ENCODE measurements at regions of chr10 and their contacts with region 1.

Region 1: GRCh38 chr10:45008524-45009161 is 7.9 kb downstream of the ZNF22 start:
- DNase-seq: peak; percentile 96
- ATAC-seq: peak; percentile 98
- H3K4me3 ChIP-seq: no peak overlapping the region
- H3K27ac ChIP-seq: no peak overlapping the region
- H3K4me1 ChIP-seq: peaks cover 5% of the 10 kb centered on the region
- H3K27me3 ChIP-seq: no peaks in the 10 kb centered on the region
- CTCF ChIP-seq: peak; percentile 98

Region 2: GRCh38 chr10:44932517-44933450 is 75.9 kb before region 1 on chr10:
- CTCF ChIA-PET with region 1: no interaction called
- POLR2A ChIA-PET with region 1: no interaction called
- intact Hi-C with region 1: loop called (anchors 2 kb)
- DNase-seq: peak; percentile 91
- ATAC-seq: peak; percentile 99
- H3K4me3 ChIP-seq: no peak overlapping the region
- H3K27ac ChIP-seq: no peak overlapping the region
- H3K4me1 ChIP-seq: no peaks in the 10 kb centered on the region
- H3K27me3 ChIP-seq: 0 out of 2 replicates have a peak, but pooled peaks cover 5% of the 10 kb centered on the region
- CTCF ChIP-seq: peak; percentile 99

Region 3: GRCh38 chr10:44959247-44960087 is 49.2 kb before region 1 on chr10 and contains the start of gene RASSF4:
- CTCF ChIA-PET with region 1: no interaction called
- POLR2A ChIA-PET with region 1: no interaction called
- intact Hi-C with region 1: loop called (anchors 2 kb)
- DNase-seq: peak; percentile 91
- ATAC-seq: peak; percentile 98
- H3K4me3 ChIP-seq: peak within 1 kb of the TSS; percentile 80
- H3K27ac ChIP-seq: peak within 1 kb of the TSS; percentile 43
- H3K4me1 ChIP-seq: peaks cover 19% of the 10 kb centered on the region
- H3K27me3 ChIP-seq: no peaks in the 10 kb centered on the region
- CTCF ChIP-seq: no peak
- total RNA-seq, gene RASSF4: 7.7 and 8.7 TPM in 2 replicates

Region 4: DNA sequence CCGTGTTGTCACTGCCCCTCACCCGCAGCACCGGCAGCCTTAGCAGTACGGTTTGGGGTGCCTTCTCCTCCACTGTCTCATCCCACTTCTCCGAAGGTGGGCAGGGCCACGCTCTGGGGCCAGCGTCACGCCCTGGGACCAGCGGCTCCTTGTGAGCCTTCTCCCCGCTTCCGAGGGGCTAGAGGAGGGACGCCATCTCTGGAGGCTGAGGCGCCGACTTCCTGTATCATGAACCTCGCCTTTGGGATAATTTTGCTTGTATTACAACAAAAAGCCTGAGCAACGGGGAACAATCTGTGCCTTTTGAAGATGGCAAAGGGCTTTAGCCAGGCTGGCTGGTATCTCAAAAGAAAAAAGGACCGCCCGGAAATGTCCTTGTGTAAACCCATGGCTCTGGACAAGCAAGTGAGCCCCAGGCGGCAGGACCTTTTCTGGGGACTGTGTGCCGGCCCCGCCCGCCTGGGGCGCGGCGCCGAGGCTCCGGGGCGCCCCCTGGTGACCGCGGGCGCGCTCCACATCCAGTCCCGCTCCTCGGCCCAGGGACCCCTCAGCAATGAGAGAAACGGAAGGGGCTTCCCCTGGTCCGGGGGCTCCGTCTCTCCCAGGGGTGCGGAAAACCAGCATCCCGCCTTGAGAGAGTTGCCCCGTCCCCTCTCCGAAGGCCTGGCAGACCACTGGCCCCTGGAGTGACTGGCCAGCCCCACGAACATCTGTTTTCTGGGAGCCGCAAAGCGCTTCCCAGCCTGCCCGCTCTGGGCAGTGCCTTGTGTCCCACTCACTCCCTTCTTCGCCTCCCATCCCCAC is 33.8 kb before region 1 on chr10:
- CTCF ChIA-PET with region 1: no interaction called
- POLR2A ChIA-PET with region 1: no interaction called
- intact Hi-C with region 1: loop called (anchors 2 kb)
- DNase-seq: peak; percentile 74
- ATAC-seq: peak; percentile 79
- H3K4me3 ChIP-seq: peak overlapping the region; percentile 91
- H3K27ac ChIP-seq: peak overlapping the region; percentile 28
- H3K4me1 ChIP-seq: peaks cover 47% of the 10 kb centered on the region
- H3K27me3 ChIP-seq: no peaks in the 10 kb centered on the region
- CTCF ChIP-seq: peak; percentile 98

Region 5: DNA sequence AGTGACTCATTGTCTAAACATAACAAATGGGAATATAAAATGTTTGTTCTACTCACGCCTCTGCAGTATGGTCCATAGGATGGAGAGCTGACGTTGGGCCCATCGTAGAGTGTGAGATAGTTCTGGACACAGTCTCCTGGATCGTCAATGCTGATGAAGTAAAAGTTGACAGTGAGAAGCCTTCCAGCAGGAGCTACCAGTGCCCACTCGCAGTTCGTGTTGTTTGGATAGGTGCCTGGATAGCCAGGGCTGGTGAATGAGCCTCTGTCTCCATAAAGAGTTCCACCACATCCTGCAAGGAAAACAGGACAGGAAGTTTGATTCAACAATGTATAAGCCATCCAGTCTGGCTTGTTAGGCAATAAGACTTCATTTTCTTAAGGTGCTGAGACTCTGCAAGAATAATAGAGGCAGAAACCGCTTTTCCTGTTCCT is 227.2 kb after region 1 on chr10:
- CTCF ChIA-PET with region 1: interaction called, 4 read pairs
- POLR2A ChIA-PET with region 1: no interaction called
- intact Hi-C with region 1: loop called (anchors 2 kb)
- DNase-seq: peak; percentile 83
- ATAC-seq: peak; percentile 82
- H3K4me3 ChIP-seq: peak overlapping the region; percentile 28; the same call in 1 of the 2 replicates
- H3K27ac ChIP-seq: peak overlapping the region; percentile 64
- H3K4me1 ChIP-seq: peaks cover 15% of the 10 kb centered on the region
- H3K27me3 ChIP-seq: no peaks in the 10 kb centered on the region
- CTCF ChIP-seq: no peak

Region 6: DNA sequence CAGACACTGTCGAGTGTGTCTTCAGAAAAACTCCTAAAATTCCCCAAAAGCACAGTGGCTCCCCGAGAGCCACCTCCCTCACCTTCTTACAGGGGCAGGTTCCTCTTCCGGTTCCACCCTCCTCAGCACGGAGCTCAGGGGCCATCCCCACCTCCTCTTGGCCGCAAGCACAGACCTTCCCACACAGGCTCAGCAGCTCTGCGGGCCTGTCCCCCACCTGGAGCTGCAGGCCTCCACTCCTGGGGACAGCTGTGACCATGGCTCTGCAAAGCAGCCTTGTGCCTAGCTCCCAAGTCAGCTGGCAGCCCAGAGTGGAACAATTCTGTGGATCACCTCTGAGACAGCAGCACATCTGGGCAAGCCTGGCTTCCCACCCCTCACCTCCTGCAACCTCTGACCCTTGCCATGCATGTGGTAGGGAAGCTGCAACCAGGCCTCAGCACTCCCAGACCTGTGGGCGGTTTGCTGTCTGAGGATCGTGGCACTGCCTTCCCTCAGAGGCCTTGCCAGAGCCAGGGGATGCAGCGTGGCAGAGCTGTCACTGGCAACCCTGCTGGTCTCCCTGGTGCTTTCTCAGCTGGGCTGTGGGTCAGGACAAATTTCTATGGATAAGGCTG is 445.1 kb after region 1 on chr10:
- CTCF ChIA-PET with region 1: no interaction called
- POLR2A ChIA-PET with region 1: no interaction called
- intact Hi-C with region 1: loop called (anchors 10 kb)
- DNase-seq: no peak
- ATAC-seq: no peak
- H3K4me3 ChIP-seq: no peak overlapping the region
- H3K27ac ChIP-seq: no peak overlapping the region
- H3K4me1 ChIP-seq: peaks cover 9% of the 10 kb centered on the region
- H3K27me3 ChIP-seq: no peaks in the 10 kb centered on the region
- CTCF ChIP-seq: no peak

Region 7: DNA sequence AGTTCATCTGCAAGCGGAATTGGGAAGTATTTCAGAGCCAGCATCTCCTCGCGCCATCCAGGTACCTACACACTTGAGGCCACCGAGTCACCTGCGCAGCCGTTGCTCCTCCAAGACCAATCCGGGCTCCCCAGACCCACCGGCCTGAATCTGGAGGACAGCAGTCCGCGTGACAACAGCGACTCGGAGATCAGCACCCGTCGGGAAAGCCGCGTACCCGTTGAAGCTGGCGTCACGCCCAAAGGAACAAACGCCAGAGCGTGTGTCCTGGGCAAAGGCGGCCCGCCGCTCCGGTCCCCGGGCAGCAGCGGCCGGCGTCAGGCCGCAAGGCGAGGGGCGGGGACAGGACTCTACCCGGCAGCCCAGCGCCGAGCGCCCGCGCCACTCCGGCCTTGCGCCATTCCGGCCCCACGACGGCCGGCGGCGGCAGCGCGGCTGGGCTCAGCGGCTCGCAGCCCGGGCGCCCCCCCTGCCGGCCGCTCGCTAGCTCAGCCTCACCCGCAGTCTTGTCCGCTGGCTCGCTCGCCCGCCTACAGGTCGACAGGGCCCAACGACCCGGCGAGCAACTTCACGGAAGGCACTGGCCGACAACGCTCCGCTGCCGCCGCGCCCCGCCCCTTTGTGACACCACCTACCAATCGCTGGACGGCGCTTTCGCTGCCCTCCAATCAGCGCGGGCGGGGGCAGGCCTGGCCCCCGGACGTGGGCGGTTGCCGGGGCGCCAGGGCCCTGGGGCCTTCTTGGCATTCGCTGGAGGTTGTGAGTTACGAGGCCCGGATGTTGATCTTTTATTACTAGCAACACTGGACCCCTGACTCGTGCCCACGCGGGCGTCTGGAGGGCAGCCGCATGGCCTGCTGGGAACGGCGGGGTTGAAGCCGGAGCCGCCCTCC is 663.8 kb after region 1 on chr10 and contains the start of gene ZFAND4:
- CTCF ChIA-PET with region 1: no interaction called
- POLR2A ChIA-PET with region 1: no interaction called
- intact Hi-C with region 1: loop called (anchors 10 kb)
- DNase-seq: peak; percentile 90
- ATAC-seq: peak; percentile 95
- H3K4me3 ChIP-seq: peak within 1 kb of the TSS; percentile 77
- H3K27ac ChIP-seq: peak within 1 kb of the TSS; percentile 60
- H3K4me1 ChIP-seq: peaks cover 4% of the 10 kb centered on the region
- H3K27me3 ChIP-seq: no peaks in the 10 kb centered on the region
- CTCF ChIP-seq: peak; percentile 48; the same call in 1 of the 2 replicates
- total RNA-seq, gene ZFAND4: 7.9 and 8.7 TPM in 2 replicates